Dendritic cell treated with granulocyte-macrophage colony-stimulating factor and Interleukin-4, amounts not matched to agents 40 ng/mL and 50 ng/mL, for 4 days (primary cell): ENCODE measurements at regions of chr3 and their contacts with region 1.

Region 1: GRCh38 chr3:194134757-194135528 is 1.0 kb upstream of the HES1 start:
- H3K4me3 Mint-ChIP-seq: peak overlapping the region; percentile 79
- H3K27ac Mint-ChIP-seq: peak overlapping the region; percentile 71
- H3K4me1 Mint-ChIP-seq: peaks cover 43% of the 10 kb centered on the region
- H3K27me3 Mint-ChIP-seq: peaks cover 79% of the 10 kb centered on the region

Region 2: GRCh38 chr3:193788189-193788991 is 346.6 kb before region 1 on chr3:
- intact Hi-C with region 1: loop called (anchors 5 kb)
- H3K4me3 Mint-ChIP-seq: no peak overlapping the region
- H3K27ac Mint-ChIP-seq: no peak overlapping the region
- H3K4me1 Mint-ChIP-seq: peaks cover 5% of the 10 kb centered on the region
- H3K27me3 Mint-ChIP-seq: peaks cover 54% of the 10 kb centered on the region

Region 3: DNA sequence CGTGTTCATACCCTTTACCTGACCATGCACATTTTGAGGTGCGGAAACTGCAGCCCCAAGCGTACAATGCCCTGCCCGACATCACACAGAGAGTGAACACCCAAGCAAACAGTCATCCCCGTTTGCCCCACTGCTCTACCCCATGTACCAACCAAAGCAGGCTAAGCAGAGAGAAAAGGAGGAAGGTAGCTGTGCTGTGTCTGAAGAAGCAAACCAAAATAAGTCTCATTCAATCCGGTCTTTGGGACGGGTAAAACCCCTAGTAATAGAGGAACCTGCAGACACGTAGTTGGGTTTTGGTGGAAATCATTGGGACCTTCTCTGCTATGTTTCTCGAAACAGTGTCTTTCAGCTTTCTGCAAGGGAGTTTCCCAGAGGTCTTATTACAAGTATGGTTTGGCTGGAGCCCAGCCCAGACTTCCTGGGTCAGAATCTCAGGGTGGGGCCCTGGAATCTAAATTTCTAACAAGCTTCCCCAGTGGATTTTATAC is 163.6 kb before region 1 on chr3:
- intact Hi-C with region 1: loop called (anchors 5 kb)
- H3K4me3 Mint-ChIP-seq: peak overlapping the region; percentile 30
- H3K27ac Mint-ChIP-seq: peak overlapping the region; percentile 57
- H3K4me1 Mint-ChIP-seq: peaks cover 25% of the 10 kb centered on the region
- H3K27me3 Mint-ChIP-seq: peaks cover 70% of the 10 kb centered on the region

Region 4: DNA sequence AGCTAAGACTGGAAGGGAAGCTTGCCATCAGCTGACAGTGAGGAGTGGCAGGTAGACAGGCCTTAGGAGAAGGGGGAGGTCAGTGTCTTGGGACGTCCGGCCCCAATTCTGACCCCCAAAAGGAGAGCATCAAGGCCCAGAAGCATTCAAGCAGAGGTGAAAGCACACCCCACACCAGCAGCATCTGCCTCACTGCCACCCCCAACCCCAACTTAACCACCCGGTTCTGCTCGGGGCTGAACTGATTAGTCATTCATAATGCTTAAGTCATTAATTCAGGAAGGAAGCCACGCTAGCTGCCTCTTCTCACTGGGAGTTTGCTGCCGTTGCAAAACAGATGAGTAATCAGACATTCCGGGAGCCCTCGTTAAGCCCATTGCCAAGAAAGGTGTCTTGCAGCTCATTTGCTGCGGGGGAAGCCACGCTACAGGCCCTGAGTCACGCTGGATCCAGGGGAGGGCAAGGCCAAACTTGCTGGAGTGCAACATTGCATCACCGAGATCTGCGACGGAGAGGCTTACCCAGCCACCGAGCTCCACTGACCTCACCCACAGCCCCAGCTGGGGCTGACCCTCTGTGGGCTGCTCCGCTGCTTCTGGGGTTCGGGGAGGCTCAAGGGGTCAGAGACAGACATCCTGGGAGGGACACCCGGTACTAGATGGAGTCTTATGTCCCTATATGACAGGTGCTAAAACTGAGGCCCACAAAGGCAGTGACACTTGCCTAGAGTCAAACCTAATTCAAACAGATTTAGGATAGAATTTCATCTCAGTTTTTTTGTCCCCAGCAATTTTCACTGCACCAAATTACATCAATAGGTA is 45.4 kb before region 1 on chr3:
- intact Hi-C with region 1: loop called (anchors 5 kb)
- H3K4me3 Mint-ChIP-seq: peak overlapping the region; percentile 58
- H3K27ac Mint-ChIP-seq: peak overlapping the region; percentile 84
- H3K4me1 Mint-ChIP-seq: peaks cover 71% of the 10 kb centered on the region
- H3K27me3 Mint-ChIP-seq: peaks cover 40% of the 10 kb centered on the region

Region 5: GRCh38 chr3:194158922-194159439 is 24.0 kb after region 1 on chr3:
- intact Hi-C with region 1: no loop called
- H3K4me3 Mint-ChIP-seq: no peak overlapping the region
- H3K27ac Mint-ChIP-seq: no peak overlapping the region
- H3K4me1 Mint-ChIP-seq: no peaks in the 10 kb centered on the region
- H3K27me3 Mint-ChIP-seq: peaks cover 61% of the 10 kb centered on the region